Breast epithelium (tissue), 4 donors: ENCODE measurements at regions of chr19 and their contacts with region 1.

Region 1: DNA sequence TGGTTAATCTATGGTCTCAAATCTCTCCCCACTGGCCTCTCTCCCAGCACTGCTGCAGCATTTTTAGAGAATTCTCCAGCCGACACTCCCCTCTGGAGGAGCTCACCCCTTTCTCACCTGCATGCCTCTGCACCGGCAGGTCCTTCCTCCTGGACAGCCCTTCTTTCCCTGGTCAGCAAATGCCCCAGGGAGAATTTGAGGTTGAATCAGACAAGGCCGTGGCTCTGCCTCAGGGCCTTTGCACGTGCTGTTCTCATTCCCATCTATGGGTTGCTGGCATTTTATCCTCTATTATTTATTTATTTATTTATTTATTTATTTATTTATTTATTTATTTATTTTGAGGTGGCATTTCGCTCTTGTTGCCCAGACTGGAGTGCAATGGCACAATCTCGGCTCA is 1.4 kb upstream of the DOCK6 start:
- DNase-seq: no peak
- H3K4me3 ChIP-seq: no peak overlapping the region
- H3K27ac ChIP-seq: no peak overlapping the region
- H3K4me1 ChIP-seq: peaks cover 0 to 5% of the 10 kb centered on the region in 2 donors
- H3K27me3 ChIP-seq: no peaks in the 10 kb centered on the region
- CTCF ChIP-seq: no peak
- POLR2A ChIP-seq: no peak

Region 2: DNA sequence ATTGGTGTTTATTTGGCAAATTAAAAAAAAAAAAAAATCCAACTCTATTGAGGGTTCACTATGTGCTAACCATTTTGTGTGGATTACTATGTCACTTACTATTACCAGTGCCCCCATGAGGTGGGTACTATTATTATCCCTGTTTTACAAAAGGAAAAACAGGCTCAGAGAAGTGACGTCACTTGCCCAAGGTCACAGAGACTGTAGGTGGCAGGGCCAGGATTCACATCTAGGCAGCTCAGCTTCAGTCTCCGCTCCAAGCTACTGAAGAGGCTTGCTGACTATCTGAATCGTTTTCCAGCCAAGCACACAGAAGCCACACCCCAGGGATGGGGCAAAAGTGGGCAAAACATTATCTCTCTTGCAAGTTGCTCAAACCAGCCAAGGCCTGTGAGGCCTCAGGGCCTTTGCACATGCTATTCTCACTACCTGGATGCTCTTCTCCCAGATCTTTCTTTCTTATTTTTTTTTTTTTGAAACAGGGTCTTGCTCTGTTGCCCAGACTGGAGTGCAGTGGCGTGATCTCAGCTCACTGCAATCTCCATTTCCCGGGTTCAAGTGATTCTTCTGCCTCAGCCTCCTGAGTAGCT is 29.1 kb before region 1 on chr19:
- intact Hi-C with region 1: no loop called
- DNase-seq: no peak
- H3K4me3 ChIP-seq: no peak overlapping the region
- H3K27ac ChIP-seq: no peak overlapping the region
- H3K4me1 ChIP-seq: no peaks in the 10 kb centered on the region
- H3K27me3 ChIP-seq: no peaks in the 10 kb centered on the region
- CTCF ChIP-seq: no peak
- POLR2A ChIP-seq: no peak

Region 3: GRCh38 chr19:11251650-11252314 is 11.9 kb before region 1 on chr19:
- intact Hi-C with region 1: loop called (anchors 1 kb)
- DNase-seq: no peak
- H3K4me3 ChIP-seq: no peak overlapping the region
- H3K27ac ChIP-seq: no peak overlapping the region
- H3K4me1 ChIP-seq: no peaks in the 10 kb centered on the region
- H3K27me3 ChIP-seq: no peaks in the 10 kb centered on the region
- CTCF ChIP-seq: no peak
- POLR2A ChIP-seq: no peak

Region 4: GRCh38 chr19:11306334-11306733 is 42.6 kb after region 1 on chr19:
- intact Hi-C with region 1: no loop called
- DNase-seq: no peak
- H3K4me3 ChIP-seq: no peak overlapping the region
- H3K27ac ChIP-seq: no peak overlapping the region
- H3K4me1 ChIP-seq: no peaks in the 10 kb centered on the region
- H3K27me3 ChIP-seq: no peaks in the 10 kb centered on the region
- CTCF ChIP-seq: no peak
- POLR2A ChIP-seq: no peak